ENCODE measurements at regions of chr1 and their contacts with region 1.

Region 1: DNA sequence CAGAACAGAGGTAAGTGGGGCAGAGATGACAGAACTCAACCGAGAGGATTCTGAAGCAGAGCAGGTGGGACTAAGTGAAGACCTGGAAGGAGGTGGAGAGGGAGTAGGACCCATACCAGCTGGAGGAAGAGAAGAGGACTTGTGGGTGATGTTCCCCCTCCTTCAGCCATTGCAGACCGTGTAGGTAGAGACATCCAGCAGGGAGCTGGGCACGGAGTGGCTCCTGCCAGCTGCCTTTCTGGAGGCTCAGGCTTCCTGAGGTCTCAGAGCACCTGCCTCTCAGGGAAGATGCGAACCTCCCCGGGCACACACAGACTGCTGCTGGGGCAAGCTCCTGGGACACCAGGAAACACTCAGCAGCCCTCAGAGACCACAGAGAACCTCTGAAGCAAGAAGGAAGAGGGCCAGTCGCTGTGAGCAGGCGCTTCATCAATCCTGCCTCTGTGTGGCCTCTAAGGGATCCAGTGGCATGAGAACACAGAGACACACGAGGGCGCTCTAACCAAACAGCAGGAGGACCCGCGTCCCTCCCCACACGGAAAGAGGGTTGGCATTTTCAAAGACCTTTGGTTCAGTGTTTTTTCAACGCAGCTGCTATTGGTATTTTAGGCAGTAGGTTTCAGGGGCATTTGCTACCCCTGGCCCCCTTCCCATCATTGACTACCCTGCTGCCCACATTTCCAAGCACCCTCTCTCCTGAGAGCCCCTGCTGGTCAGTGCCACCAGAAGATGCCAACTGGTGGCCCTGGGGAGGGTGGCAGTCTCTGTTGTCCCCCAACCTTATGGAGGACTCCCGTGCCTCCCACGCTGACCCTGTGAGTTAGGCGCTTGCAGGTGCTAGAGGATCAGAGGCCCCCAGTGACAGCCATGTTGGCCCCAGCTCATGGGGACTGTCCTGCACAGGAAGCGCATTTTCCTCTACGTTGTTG is 89.6 kb upstream of the EDN2 start:
- DNase-seq: peak; percentile 85

Region 2: GRCh38 chr1:41516168-41517061 is 57.6 kb before region 1 on chr1:
- intact Hi-C with region 1: loop called (anchors 5 kb)
- DNase-seq: peak; percentile 94

Region 3: DNA sequence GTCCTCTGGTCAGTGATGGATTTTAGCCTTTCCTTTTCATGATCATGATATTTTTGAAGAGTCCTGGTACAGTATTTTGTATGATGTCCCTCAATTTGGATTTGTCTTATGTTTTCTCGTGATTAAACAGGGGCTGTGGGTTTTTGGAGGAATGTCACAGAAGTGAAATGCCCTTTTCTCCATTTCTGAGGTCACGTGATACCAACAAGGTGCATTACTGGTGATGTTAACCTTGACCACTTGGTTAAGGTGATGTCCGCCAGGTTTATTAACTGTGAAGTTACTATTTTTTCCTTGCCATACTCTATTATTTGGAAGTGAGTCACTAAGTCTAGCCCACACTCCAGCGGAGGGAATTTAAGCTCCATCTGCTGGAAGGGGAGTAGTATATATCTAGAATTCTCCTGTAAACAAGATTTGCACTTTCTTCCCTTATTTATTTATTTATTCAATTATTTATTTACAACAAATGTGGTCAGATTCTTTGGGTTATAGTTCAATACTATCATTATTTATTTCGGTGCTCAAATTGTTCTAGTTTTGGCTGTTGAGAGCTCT is 221.2 kb after region 1 on chr1:
- intact Hi-C with region 1: loop called (anchors 5 kb)
- DNase-seq: no peak

Region 4: GRCh38 chr1:42173155-42173933 is 599.3 kb after region 1 on chr1:
- intact Hi-C with region 1: loop called (anchors 10 kb)
- DNase-seq: peak; percentile 87

Measured in cardiac septum (tissue), 1 donor.